Activated CD4-positive, alpha-beta memory T cell treated with anti-CD3 and anti-CD28 coated beads for 36 hours (primary cell): ENCODE measurements at regions of chr14 and their contacts with region 1.

Region 1: DNA sequence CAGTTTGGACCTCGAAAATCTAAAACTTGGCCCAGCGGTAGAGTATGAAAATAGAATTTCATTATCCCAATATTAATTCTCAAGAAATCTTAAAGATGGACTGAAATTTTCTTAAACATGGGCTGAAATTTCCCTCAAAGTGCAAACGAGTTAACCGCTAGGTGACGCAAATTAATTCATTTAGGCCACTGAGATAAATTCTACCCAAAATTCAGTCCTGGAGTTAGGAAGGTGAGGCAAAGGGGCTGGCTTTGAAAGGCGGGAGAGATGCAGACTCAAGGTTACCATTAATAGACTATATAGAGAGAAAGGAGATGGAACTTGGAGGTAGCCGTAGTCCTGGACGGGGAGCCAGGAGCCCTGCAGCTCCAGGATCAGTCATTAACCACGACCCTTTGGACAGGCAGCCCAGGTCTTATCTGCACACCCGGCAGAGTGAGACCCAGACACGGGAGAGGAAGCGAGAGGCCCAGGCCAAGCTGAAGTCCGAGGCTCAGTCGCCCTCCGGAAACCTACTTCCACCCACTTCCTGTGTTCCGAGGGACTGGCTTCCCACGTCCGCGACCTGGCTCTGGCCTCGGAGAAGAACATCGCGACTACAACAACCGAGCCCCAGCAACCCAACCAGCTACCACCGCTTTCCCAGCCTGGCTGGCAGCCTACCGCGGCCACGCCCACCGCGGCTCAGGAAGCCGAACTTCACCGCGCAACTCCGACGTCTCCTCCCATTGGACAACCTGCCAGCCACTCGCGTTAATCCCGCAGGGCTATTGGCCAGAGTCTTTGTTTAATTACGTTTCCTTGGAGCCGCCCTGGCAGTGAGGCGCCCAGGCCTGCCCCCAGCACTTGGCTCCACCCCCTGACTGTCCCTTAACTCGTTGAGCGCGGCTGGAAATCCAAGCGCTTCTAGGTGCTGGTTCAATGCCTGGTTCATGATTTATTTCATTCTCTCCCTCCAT is at the start of gene EFCAB11:
- DNase-seq: peak; percentile 98
- H3K4me3 Mint-ChIP-seq: peak within 1 kb of the TSS; percentile 96
- H3K27ac Mint-ChIP-seq: peak within 1 kb of the TSS; percentile 97
- H3K4me1 Mint-ChIP-seq: peaks cover 36% of the 10 kb centered on the region
- H3K27me3 Mint-ChIP-seq: no peaks in the 10 kb centered on the region
- total RNA-seq, gene EFCAB11: 10.6 to 10.8 TPM

Region 2: GRCh38 chr14:88599761-88600439 is 1354.4 kb before region 1 on chr14:
- CTCF ChIA-PET with region 1: no interaction called
- POLR2A ChIA-PET with region 1: no interaction called
- intact Hi-C with region 1: loop called (anchors 1 kb)
- DNase-seq: peak; percentile 65
- H3K4me3 Mint-ChIP-seq: peak overlapping the region; percentile 25
- H3K27ac Mint-ChIP-seq: peak overlapping the region; percentile 84
- H3K4me1 Mint-ChIP-seq: peaks cover 40% of the 10 kb centered on the region
- H3K27me3 Mint-ChIP-seq: no peaks in the 10 kb centered on the region

Region 3: DNA sequence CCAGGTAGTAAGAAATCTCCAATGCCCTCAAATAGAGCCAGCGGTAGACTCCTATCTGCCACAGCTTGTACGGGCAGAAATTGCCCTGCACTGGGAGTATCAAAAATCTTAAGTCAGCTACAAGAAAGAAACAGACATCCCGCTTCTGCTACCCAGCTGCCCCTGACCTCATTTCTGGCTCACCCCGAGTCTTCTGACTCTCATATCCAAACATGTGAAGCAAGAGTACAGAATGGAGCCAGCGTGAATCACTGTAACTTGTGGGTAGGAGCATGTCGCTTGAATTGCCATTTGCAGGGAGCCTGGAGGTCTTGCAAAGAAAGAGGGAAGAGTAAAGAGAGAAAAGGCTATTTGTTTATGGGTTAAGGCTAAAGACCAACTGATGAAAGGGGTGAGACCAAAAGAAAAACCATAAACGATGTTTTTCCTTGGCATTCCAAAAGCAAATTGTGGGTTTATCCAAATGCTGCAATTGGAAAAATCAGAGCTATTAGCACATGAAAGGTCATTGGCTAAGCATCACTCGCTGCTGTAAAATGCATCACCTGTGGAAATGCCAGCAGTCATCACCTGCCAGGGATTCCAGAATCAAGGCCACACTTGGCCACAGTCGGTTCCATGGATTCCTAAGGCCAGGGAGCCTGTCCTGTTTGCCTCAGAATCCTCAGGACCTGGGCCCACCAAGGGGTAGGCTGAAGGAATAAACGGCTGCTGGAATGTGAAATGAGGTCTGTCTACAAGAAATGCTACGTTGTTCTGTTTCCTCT is 623.9 kb before region 1 on chr14:
- CTCF ChIA-PET with region 1: no interaction called
- POLR2A ChIA-PET with region 1: no interaction called
- intact Hi-C with region 1: no loop called
- DNase-seq: no peak
- H3K4me3 Mint-ChIP-seq: no peak overlapping the region
- H3K27ac Mint-ChIP-seq: no peak overlapping the region
- H3K4me1 Mint-ChIP-seq: peaks cover 36% of the 10 kb centered on the region
- H3K27me3 Mint-ChIP-seq: no peaks in the 10 kb centered on the region

Region 4: DNA sequence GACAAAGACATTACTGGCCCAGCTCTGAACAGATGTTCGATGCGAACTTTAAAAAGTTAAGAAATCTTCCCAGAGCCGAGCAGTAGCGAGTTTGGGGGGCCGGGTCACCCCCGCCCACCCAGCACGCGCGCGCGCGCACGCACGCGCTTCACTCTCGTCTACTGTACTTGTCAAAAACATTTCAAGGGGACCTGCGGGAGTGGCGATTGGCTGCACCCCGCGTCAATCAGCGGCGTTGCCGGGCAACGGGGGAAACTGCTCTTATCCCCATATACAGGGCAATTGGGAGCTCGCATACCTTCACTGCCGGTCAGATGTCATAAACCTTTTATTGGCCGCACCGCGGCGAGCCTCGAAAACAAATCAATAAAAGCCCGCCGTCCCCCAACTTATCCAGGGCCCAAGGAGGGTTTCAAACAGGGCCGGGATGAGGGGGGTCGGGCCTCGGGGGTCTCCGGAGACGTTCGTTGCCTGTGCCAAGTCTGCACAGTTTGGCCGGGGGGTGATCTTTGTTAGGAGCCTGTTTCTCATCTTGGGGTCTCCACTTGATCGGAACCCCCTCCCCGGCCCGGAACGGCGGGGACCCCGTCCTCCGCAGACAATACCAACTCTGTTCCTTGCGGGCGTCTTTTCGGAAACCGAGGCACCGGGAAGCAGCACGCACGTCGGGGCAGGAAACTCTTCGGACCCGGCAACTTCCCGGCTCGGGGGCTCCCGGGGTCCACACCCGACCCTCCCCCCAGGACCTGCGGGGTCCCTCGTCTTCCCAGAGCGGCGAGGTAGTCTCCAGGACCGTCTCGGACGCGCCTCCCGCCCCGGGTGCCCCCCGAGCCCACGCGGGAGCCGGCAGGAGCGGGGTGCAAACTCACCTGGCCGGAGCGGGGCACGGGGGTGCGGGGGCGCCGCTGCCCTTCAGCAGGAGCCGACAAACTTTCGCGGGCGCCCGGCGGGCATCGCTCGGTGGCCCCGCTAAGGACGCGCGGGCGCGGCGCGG is 538.0 kb before region 1 on chr14:
- CTCF ChIA-PET with region 1: no interaction called
- POLR2A ChIA-PET with region 1: no interaction called
- intact Hi-C with region 1: loop called (anchors 2 kb)
- DNase-seq: peak; percentile 99
- H3K4me3 Mint-ChIP-seq: peak overlapping the region; percentile 87
- H3K27ac Mint-ChIP-seq: peak overlapping the region; percentile 81
- H3K4me1 Mint-ChIP-seq: peaks cover 46% of the 10 kb centered on the region
- H3K27me3 Mint-ChIP-seq: no peaks in the 10 kb centered on the region

Region 5: DNA sequence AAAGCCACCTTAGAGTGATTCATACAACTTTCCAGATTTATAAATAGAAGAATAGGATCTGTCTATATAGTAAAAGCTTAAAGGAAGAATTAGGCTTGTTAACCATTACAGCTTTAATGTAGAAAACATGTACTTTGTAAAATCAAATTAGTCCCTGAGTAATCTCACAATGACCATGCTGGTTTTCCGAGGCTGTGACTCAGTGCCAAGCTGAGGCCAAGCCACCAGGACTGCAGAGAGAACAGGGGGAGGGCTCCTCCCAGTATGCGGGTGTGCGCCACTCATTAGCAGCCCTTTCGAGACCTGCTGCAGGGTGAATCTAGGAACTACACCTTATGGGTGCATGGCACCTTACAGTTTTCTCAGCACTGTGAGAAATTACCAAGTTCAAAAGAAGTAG is 166.8 kb before region 1 on chr14:
- CTCF ChIA-PET with region 1: no interaction called
- POLR2A ChIA-PET with region 1: no interaction called
- intact Hi-C with region 1: no loop called
- DNase-seq: no peak
- H3K4me3 Mint-ChIP-seq: no peak overlapping the region
- H3K27ac Mint-ChIP-seq: no peak overlapping the region
- H3K4me1 Mint-ChIP-seq: no peaks in the 10 kb centered on the region
- H3K27me3 Mint-ChIP-seq: no peaks in the 10 kb centered on the region

Region 6: GRCh38 chr14:89833120-89833644 is 121.2 kb before region 1 on chr14:
- CTCF ChIA-PET with region 1: no interaction called
- POLR2A ChIA-PET with region 1: no interaction called
- intact Hi-C with region 1: no loop called
- DNase-seq: no peak
- H3K4me3 Mint-ChIP-seq: no peak overlapping the region
- H3K27ac Mint-ChIP-seq: no peak overlapping the region
- H3K4me1 Mint-ChIP-seq: no peaks in the 10 kb centered on the region
- H3K27me3 Mint-ChIP-seq: no peaks in the 10 kb centered on the region

Region 7: DNA sequence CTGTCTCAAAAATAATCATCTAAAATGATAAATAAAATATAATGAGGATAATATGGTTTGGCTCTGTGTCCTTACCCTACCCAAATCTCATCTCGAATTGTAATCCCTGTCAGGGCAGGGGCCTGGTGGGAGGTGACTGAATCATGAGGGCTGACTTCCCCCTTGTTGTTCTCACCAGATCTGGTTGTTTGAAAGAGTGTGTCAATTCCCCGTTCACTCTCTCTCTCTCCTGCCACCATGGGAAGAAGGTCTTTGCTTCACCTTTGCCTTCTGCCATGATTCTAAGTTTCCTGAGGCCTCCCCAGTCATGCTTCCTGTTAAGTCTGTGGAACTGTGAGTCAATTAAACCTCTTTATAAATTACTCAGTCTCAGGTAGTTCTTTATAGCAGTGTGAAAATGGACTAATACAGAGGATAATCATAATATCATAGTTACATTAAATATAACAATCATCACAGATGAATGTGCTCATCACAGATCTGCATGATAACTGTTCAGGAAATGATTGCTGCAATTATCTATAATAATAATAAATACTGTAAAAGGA is 12.4 kb before region 1 on chr14:
- CTCF ChIA-PET with region 1: interaction called, 61 read pairs
- POLR2A ChIA-PET with region 1: interaction called, 6 read pairs
- intact Hi-C with region 1: no loop called
- DNase-seq: peak; percentile 21
- H3K4me3 Mint-ChIP-seq: no peak overlapping the region
- H3K27ac Mint-ChIP-seq: no peak overlapping the region
- H3K4me1 Mint-ChIP-seq: peaks cover 5% of the 10 kb centered on the region
- H3K27me3 Mint-ChIP-seq: no peaks in the 10 kb centered on the region

Region 8: GRCh38 chr14:89992273-89992672 is 37.9 kb after region 1 on chr14:
- CTCF ChIA-PET with region 1: no interaction called
- POLR2A ChIA-PET with region 1: no interaction called
- intact Hi-C with region 1: no loop called
- DNase-seq: no peak
- H3K4me3 Mint-ChIP-seq: no peak overlapping the region
- H3K27ac Mint-ChIP-seq: no peak overlapping the region
- H3K4me1 Mint-ChIP-seq: no peaks in the 10 kb centered on the region
- H3K27me3 Mint-ChIP-seq: no peaks in the 10 kb centered on the region

Region 9: GRCh38 chr14:90060312-90060964 is 106.1 kb after region 1 on chr14:
- CTCF ChIA-PET with region 1: interaction called, 4 read pairs
- POLR2A ChIA-PET with region 1: interaction called, 4 read pairs
- intact Hi-C with region 1: loop called (anchors 1 kb)
- DNase-seq: peak; percentile 68
- H3K4me3 Mint-ChIP-seq: peak overlapping the region; percentile 53
- H3K27ac Mint-ChIP-seq: no peak overlapping the region
- H3K4me1 Mint-ChIP-seq: peaks cover 19% of the 10 kb centered on the region
- H3K27me3 Mint-ChIP-seq: peaks cover 57% of the 10 kb centered on the region

Region 10: GRCh38 chr14:90383075-90383730 is 428.9 kb after region 1 on chr14:
- CTCF ChIA-PET with region 1: no interaction called
- POLR2A ChIA-PET with region 1: no interaction called
- intact Hi-C with region 1: loop called (anchors 5 kb)
- DNase-seq: peak; percentile 99
- H3K4me3 Mint-ChIP-seq: no peak overlapping the region
- H3K27ac Mint-ChIP-seq: no peak overlapping the region
- H3K4me1 Mint-ChIP-seq: peaks cover 22% of the 10 kb centered on the region
- H3K27me3 Mint-ChIP-seq: no peaks in the 10 kb centered on the region